ENCODE measurements at regions of chr20 and their contacts with region 1.

Region 1: DNA sequence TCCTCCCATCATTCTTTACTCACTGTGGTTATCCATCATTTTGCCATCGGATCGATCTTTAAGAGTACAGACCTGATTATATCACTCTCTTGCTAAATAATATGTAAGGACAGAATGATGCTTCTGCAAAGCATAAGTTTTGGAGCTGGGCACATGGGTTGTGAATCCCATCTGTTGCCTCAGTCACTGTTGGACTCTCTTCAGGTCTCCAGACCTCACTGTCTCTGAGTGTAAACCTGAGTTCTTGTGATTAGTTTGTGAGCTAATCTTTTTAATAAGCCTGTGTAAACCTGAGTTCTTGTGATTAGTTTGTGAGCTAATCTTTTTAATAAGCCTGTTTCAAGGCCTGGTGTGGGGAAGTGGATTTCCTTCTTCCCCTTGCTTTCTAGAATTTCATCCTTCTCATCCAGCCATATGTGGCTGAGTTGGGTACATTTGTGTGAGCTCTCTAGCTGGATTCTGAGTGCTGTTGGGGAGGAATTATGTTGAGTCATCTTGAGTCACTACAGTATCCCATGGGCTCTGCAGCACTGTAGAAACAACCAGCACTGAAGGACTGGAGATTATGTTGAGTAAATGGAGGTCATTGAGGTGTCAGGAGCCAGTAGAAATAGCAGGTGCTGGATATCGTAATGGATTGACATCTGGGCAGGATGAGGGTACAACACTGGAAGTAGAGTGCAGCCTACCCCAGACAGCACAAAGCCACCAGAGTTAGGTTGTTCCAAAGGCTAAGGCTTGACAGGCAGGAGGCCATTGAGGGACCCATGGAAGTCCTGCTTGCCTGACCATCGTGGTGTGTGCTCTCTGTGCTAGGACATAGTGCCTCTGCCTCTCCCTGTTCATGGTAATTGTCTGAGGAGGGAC is 52.4 kb downstream of the SCAND1 start:
- DNase-seq: no peak
- H3K4me3 ChIP-seq: no peak overlapping the region
- H3K27ac ChIP-seq: no peak overlapping the region
- H3K4me1 ChIP-seq: no peaks in the 10 kb centered on the region
- H3K27me3 ChIP-seq: no peaks in the 10 kb centered on the region
- CTCF ChIP-seq: no peak
- EP300 ChIP-seq: no peak
- POLR2A ChIP-seq: no peak

Region 2: GRCh38 chr20:35575970-35576623 is 325.8 kb before region 1 on chr20:
- in situ Hi-C with region 1: no loop called
- intact Hi-C with region 1: loop called (anchors 10 kb)
- DNase-seq: peak; percentile 90
- H3K4me3 ChIP-seq: no peak overlapping the region
- H3K27ac ChIP-seq: peak overlapping the region; percentile 56 to 71 (median 66)
- H3K4me1 ChIP-seq: peaks cover 0 to 24% (median 14%) of the 10 kb centered on the region in 4 donors
- H3K27me3 ChIP-seq: no peaks in the 10 kb centered on the region
- CTCF ChIP-seq: no peak
- EP300 ChIP-seq: no peak
- POLR2A ChIP-seq: no peak

Region 3: GRCh38 chr20:35871311-35871771 is 30.6 kb before region 1 on chr20:
- in situ Hi-C with region 1: no loop called
- intact Hi-C with region 1: no loop called
- DNase-seq: peak; percentile 11
- H3K4me3 ChIP-seq: no peak overlapping the region
- H3K27ac ChIP-seq: peak overlapping the region; percentile 21 to 61 (median 46)
- H3K4me1 ChIP-seq: peaks cover 0 to 5% (median 3%) of the 10 kb centered on the region in 4 donors
- H3K27me3 ChIP-seq: no peaks in the 10 kb centered on the region
- CTCF ChIP-seq: no peak
- EP300 ChIP-seq: no peak
- POLR2A ChIP-seq: no peak

Region 4: GRCh38 chr20:36317675-36318074 is 415.8 kb after region 1 on chr20:
- in situ Hi-C with region 1: no loop called
- intact Hi-C with region 1: no loop called
- DNase-seq: no peak
- H3K4me3 ChIP-seq: no peak overlapping the region
- H3K27ac ChIP-seq: no peak overlapping the region
- H3K4me1 ChIP-seq: no peaks in the 10 kb centered on the region
- H3K27me3 ChIP-seq: peaks cover 13% of the 10 kb centered on the region
- CTCF ChIP-seq: no peak
- EP300 ChIP-seq: no peak
- POLR2A ChIP-seq: no peak